Right ventricle myocardium superior (tissue), 1 donor: ENCODE measurements at regions of chr1 and their contacts with region 1.

Region 1: DNA sequence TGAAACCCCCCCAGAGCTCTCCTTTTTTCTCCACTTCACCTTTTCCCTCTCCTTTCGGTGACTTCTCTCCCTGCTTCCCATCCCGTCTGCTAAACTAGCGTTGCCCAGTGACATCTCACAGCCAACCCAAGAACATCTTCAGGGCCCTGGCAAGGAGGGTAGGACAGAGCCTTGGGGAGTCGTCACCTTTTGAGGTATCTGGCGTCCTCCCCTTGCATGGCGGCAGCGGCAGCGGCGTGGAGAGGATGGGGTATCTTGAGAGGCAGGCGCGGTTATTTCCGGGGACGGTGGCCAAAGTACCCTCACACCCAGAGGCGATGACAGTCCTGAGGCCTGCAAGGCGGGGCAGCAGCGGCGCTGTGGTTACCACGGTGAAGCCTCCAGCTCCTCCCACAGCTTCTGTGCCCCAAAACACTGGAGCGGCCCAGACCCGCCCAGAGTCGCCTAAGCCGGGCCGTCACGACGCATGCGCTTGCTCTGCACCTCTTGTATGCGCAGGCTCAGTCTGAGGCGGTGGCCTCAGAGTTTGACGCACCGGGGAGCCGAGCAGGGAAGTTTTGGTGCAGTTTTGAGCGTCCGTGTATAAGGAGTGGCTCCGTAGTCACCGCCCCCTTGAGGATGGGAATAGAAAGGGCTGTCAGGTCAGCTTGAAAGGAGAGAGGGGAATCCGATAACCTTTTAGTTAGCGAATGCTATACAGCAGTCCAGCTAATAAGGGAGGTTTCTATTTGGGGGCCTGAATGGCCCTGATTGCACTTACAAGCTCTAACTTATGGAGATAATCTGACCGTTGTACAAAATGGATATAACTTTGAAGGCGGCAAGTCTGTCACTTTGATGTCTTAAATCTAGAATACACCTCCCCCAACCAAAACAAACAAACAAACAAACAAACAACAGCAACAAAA is at the start of gene KIFAP3:
- DNase-seq: peak; percentile 99
- ATAC-seq: peak; percentile 100
- total RNA-seq, gene KIFAP3: 30.3 TPM

Region 2: DNA sequence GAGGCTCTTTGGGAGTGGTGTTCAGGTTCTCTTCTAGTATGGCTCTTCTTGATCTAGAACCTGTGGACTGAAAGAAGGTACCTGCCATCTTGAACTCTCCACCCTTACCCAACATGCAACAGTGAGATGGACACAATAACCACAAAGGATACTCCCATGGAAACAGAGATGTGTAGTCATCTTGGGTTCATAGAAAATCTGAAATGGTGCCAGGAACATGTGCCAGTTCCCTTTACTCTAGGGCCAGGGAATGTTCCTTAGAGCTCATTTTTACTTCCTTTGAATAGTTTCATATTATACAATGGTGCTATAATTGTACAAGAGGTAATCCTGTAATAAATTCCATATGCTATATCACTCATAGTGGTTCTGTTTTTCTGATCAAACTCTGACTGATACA is 167.6 kb before region 1 on chr1:
- intact Hi-C with region 1: no loop called
- DNase-seq: no peak
- ATAC-seq: peak; percentile 15

Region 3: DNA sequence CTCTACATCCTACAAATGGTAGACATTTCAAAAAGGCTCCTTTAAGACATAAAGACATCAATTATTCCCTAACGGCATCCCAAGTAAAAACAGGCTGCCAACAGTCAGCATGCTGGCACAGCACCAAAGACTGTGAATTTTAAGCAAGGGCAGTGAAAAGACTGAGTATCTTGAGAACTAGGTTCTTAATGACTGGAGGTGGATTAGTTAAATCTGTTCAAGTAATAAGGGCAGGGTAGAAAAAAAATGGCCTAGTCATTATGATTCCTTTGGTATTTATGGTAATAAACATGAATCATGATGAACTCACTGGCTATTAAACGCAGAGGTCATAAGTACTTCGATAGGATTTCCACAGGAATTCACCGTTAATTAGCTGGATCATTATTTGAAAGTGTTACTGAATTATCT is 75.2 kb before region 1 on chr1:
- intact Hi-C with region 1: no loop called
- DNase-seq: peak; percentile 48
- ATAC-seq: peak; percentile 27

Region 4: DNA sequence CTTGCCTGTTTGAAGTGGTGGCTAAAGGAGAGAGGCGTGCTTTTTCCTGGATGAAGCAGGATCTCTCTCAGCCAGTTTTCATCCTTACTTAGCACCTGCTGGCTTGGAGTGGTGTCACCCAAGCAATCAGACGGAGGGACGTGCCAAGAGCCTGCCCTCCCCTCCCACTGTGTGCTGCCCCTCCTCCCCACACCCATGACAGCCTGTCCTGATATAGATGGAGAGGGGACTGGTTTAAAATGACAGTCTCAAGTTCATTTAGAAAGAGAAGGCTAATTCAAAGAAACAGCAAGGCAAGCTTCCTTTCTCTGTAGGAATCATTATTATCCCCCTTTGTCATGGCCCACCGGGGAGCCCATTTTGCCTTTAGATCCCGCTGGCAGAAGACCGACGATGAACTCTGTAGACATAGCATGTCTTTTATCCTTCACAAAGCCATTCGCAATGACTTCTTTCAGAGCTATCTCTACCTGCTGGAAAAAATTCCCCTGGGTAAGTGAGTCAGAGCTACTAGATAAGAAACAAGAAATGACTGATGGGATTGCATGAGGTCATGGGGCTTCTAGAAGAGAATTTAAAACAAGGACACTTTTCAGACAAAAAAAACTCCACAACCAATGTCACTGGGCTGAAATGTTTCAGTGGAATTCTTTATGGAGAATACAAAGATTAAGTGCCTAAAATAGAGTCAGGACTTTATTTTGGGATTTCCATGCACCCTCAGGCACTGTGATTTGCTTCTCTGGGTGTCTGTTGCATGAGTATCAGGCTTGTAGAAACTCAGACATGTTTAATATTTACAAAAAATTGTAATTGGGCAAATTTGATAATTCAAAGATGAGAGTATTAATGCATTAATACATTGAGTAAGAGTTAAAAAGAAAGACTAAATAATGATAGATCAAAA is 71.5 kb after region 1 on chr1 and contains the start of gene NTMT2:
- intact Hi-C with region 1: loop called (anchors 2 kb)
- DNase-seq: peak; percentile 68
- ATAC-seq: peak; percentile 96
- total RNA-seq, gene NTMT2: 4.1 TPM

Region 5: GRCh38 chr1:170698301-170699275 is 624.1 kb after region 1 on chr1:
- intact Hi-C with region 1: no loop called
- DNase-seq: no peak
- ATAC-seq: peak; percentile 69